Right ventricle myocardium inferior (tissue), 1 donor: ENCODE measurements at regions of chr5 and their contacts with region 1.

Region 1: DNA sequence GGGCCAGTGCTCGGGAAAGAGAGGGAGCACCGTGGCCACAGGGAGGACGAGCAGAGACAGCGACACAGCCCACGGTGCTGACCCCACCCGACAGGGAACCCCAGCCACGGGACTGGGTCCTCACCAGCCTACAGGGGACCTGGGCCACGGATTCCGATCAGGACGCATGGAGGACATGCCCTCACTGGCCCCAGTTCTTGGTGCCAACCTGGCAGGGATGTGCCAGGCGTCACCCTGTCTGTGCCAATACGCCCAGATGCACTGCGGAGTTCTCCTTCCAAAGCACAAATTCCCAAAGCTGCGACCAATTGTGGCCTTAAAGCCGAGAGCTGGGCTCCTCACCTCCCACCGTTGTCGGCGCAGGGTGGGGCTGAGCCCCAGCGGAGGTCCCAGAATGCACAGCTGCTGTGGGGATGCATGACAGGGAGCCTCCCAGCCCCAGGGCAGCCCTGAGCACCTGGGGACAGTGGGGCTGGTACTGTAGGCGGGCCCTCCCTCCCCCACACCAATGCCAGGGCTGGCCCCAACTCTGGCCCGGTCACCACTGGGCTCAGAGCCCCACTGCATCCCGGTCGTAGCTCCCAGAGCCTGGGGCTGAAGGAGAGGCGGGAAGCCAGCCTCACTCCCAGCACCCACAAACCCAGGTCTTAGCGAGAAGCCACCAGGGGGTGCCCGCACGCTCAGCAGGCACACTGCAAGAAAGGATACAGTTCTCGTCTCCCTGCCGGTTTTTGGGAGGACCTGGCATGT is 44.2 kb downstream of the NKD2 start:
- DNase-seq: peak; percentile 70
- ATAC-seq: peak; percentile 61

Region 2: DNA sequence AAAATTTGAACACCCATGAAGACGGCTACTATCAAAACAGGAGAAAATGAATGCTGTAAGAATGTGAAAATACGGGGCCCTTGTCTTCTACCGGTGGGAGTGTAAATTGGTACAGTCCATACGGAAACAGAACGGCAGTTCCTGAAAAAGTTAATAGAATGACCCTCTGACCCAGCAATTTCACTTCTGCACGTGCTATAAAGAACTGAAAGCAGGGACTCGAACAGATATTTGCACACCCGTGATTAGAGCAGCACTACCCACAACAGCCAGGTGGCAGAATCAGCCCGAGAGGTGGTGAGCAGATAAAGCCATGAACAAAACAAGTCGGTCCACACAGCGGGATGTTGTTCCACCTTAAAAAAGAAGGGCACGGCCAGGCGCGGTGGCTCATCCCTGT is 81.7 kb after region 1 on chr5:
- intact Hi-C with region 1: loop called (anchors 5 kb)
- DNase-seq: peak; percentile 57
- ATAC-seq: no peak